ENCODE measurements at regions of chr10 and their contacts with region 1.

Region 1: GRCh38 chr10:93376372-93377293 is 105.5 kb downstream of the MYOF start:
- DNase-seq: no peak
- ATAC-seq: peak; percentile 90

Region 2: DNA sequence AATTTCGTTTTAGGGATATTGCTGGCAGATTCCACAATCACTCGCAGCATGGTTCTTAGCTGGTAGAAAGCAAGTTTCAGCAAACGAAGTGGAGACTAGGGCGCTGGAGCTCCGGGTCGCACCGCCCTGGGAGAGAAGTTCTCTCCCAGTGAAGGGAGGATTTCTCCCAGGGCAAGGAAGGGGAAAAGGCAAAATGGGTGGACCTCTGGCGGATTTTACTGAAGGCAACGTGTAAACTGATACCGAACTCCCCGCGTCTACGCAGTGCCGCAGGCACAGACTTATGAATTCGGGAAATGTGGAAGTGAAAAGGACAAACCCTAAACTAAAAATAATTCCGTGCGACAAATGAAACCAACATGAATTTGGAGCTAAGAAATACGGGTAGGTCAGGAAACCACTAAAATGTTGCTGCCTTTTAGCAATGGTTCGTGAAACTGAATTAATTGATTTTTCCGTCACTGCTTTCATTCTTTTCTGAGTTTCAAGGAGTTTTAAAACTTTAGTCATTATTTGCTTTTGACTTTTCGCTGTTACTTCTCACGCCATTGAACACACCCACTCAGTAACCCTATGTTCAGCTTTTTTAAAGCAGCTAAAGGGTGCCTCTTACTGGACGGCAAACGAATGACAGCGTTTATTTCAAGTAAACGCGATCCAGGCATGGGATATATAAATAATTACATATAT is 105.7 kb after region 1 on chr10 and contains the start of gene MYOF:
- intact Hi-C with region 1: loop called (anchors 1 kb)
- DNase-seq: no peak
- ATAC-seq: peak; percentile 88
- total RNA-seq, gene MYOF: 34.4 TPM

Region 3: DNA sequence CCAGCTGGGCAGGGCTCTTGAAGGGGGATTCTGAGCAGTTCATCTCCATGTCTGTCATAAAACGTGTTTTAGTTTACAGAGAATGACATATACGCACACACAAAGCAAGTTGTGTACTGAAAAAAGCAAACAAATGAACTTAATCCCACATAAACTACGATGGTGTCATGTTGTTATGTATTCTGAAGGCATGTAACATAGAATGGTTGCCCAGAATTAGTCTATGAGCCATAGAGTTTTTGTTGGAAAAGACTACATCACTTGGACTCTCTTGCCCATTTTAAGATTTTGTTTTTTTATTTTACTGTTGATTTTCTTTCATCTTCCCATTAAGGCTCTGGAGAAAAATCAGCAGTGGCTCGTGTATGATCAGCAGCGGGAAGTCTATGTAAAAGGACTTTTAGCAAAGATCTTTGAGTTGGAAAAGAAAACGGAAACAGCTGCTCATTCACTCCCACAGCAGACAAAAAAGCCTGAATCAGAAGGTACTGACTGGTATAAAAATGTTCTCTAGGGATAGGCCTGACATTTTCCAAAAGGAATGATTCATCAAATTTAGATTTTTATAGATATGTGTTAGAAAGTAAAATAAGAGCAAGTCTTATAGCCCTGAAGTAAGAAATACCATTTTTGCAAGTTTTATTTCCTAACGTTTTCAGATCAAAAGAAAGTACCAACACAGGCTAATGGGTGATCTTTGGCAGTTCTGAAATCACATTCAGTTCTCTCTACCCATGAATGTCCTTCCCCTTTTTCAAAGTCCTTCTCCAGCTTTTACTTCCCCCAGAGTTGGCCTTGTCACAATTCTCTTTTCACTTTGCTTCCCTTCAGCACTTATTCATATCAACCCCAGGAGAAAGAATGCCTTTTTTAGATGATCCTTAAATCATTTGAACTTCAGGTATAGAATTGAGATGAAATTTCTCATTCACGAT is 138.7 kb after region 1 on chr10:
- intact Hi-C with region 1: loop called (anchors 1 kb)
- DNase-seq: no peak
- ATAC-seq: peak; percentile 60

Region 4: GRCh38 chr10:93680412-93681047 is 303.9 kb after region 1 on chr10:
- intact Hi-C with region 1: loop called (anchors 10 kb)
- DNase-seq: no peak
- ATAC-seq: no peak